ENCODE measurements at regions of chr15 and their contacts with region 1.

Region 1: GRCh38 chr15:48810414-48811317 is at the start of gene CEP152:
- DNase-seq: peak; percentile 100
- H3K4me3 ChIP-seq: peak within 1 kb of the TSS; percentile 59 to 90 (median 62)
- H3K27ac ChIP-seq: peak within 1 kb of the TSS; percentile 64
- H3K4me1 ChIP-seq: peaks cover 12% of the 10 kb centered on the region
- H3K27me3 ChIP-seq: peaks cover 7 to 9% of the 10 kb centered on the region in 2 experiments
- CTCF ChIP-seq: no peak
- POLR2A ChIP-seq: peak; percentile 61
- total RNA-seq, gene CEP152: 13.8 and 15.7 TPM in 2 replicates

Region 2: GRCh38 chr15:48330855-48331795 is 479.5 kb before region 1 on chr15 and contains the start of gene DUT:
- CTCF ChIA-PET with region 1: no interaction called
- POLR2A ChIA-PET with region 1: no interaction called
- dilution Hi-C with region 1: no loop called
- intact Hi-C with region 1: loop called (anchors 1 kb)
- DNase-seq: peak; percentile 86
- H3K4me3 ChIP-seq: peak within 1 kb of the TSS; percentile 65 to 92 (median 90)
- H3K27ac ChIP-seq: peak within 1 kb of the TSS; percentile 92
- H3K4me1 ChIP-seq: peaks cover 21% of the 10 kb centered on the region
- H3K27me3 ChIP-seq: no peaks in the 10 kb centered on the region
- CTCF ChIP-seq: no peak
- POLR2A ChIP-seq: peak; percentile 96
- total RNA-seq, gene DUT: 127 and 135 TPM in 2 replicates

Region 3: GRCh38 chr15:48392356-48392755 is 418.3 kb before region 1 on chr15:
- CTCF ChIA-PET with region 1: no interaction called
- POLR2A ChIA-PET with region 1: no interaction called
- dilution Hi-C with region 1: no loop called
- intact Hi-C with region 1: loop called (anchors 1 kb)
- DNase-seq: peak; percentile 99
- H3K4me3 ChIP-seq: no peak overlapping the region
- H3K27ac ChIP-seq: peak overlapping the region; percentile 78
- H3K4me1 ChIP-seq: peaks cover 36% of the 10 kb centered on the region
- H3K27me3 ChIP-seq: no peaks in the 10 kb centered on the region
- CTCF ChIP-seq: no peak
- POLR2A ChIP-seq: no peak

Region 4: DNA sequence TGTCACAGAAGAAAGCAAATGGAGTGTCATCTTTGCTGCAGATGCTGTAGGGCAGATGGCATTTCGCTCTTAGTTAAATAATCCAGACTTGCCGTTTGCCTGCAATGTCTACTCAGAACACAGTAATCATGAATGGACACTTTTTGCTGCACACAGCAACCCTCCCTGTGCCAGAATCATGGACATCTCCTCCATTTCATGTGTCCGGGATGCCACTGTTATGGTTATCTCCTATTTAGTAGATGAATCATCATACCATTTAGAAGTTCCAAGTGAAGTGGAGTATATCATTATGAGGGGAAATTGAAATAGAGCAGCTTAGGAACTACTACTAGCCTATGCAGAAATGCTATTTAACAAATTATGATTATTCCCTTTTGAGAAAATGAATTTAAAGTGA is 360.9 kb before region 1 on chr15:
- CTCF ChIA-PET with region 1: no interaction called
- POLR2A ChIA-PET with region 1: no interaction called
- dilution Hi-C with region 1: no loop called
- intact Hi-C with region 1: loop called (anchors 5 kb)
- DNase-seq: no peak
- H3K4me3 ChIP-seq: no peak overlapping the region
- H3K27ac ChIP-seq: no peak overlapping the region
- H3K4me1 ChIP-seq: peaks cover 38% of the 10 kb centered on the region
- H3K27me3 ChIP-seq: no peaks in the 10 kb centered on the region
- CTCF ChIP-seq: no peak
- POLR2A ChIP-seq: no peak

Region 5: GRCh38 chr15:48722764-48723661 is 87.7 kb before region 1 on chr15:
- CTCF ChIA-PET with region 1: interaction called, 4 read pairs
- POLR2A ChIA-PET with region 1: no interaction called
- dilution Hi-C with region 1: no loop called
- intact Hi-C with region 1: loop called (anchors 5 kb)
- DNase-seq: peak; percentile 79
- H3K4me3 ChIP-seq: no peak overlapping the region
- H3K27ac ChIP-seq: peak overlapping the region; percentile 7
- H3K4me1 ChIP-seq: peaks cover 20% of the 10 kb centered on the region
- H3K27me3 ChIP-seq: no peaks in the 10 kb centered on the region
- CTCF ChIP-seq: no peak
- POLR2A ChIP-seq: no peak

Region 6: GRCh38 chr15:48877630-48878595 is 67.2 kb after region 1 on chr15 and contains the start of gene EID1:
- CTCF ChIA-PET with region 1: no interaction called
- POLR2A ChIA-PET with region 1: no interaction called
- dilution Hi-C with region 1: no loop called
- intact Hi-C with region 1: loop called (anchors 2 kb)
- DNase-seq: peak; percentile 97
- H3K4me3 ChIP-seq: peak within 1 kb of the TSS; percentile 25 to 86 (median 67)
- H3K27ac ChIP-seq: peak within 1 kb of the TSS; percentile 29
- H3K4me1 ChIP-seq: peaks cover 13% of the 10 kb centered on the region
- H3K27me3 ChIP-seq: peaks cover under 1 to 7% of the 10 kb centered on the region in 2 experiments
- CTCF ChIP-seq: no peak
- POLR2A ChIP-seq: peak; percentile 86
- total RNA-seq, gene EID1: 146 and 153 TPM in 2 replicates